Activated naive CD4-positive, alpha-beta T cell treated with anti-CD3 and anti-CD28 coated beads for 36 hours (primary cell): ENCODE measurements at regions of chr6 and their contacts with region 1.

Region 1: DNA sequence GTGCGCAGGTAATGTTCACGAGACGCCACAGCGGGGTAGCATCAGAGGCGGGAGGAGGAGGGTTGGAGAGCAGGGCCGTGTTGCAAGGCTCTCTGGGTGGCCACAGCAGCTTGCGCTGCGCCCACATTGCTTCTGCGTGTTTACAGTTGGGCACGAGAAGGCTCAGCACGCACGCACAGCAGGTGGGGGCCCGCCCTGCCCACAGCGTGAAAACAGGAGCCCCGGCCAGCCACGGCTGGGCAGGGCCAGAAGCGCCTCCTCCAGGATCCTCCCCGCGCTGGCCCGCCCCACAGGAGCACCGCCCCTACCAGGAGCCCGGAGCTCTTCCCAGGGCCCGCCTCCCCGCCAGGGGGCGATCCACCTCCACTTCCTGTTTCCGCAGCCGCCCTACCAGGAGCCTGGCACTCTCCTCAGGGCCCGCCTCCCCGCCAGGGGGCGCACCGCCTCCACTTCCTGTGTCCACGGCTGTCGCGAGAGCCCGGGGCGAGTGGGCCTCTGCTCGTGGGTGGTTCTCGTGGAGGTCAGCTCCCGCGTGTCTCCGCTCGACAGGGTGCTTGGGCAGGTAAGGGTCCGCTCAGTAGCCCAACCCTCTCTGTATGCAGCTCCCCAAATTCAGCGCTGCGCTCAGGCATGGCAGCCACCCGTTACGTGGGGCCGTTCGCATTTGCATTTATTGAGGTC is at the start of gene FAM50B:
- DNase-seq: peak; percentile 95
- H3K4me3 Mint-ChIP-seq: peak within 1 kb of the TSS; percentile 71
- H3K27ac Mint-ChIP-seq: peak within 1 kb of the TSS; percentile 63
- H3K4me1 Mint-ChIP-seq: peaks cover 28% of the 10 kb centered on the region
- H3K27me3 Mint-ChIP-seq: no peaks in the 10 kb centered on the region
- total RNA-seq, gene FAM50B: 4.4 to 5.1 TPM

Region 2: DNA sequence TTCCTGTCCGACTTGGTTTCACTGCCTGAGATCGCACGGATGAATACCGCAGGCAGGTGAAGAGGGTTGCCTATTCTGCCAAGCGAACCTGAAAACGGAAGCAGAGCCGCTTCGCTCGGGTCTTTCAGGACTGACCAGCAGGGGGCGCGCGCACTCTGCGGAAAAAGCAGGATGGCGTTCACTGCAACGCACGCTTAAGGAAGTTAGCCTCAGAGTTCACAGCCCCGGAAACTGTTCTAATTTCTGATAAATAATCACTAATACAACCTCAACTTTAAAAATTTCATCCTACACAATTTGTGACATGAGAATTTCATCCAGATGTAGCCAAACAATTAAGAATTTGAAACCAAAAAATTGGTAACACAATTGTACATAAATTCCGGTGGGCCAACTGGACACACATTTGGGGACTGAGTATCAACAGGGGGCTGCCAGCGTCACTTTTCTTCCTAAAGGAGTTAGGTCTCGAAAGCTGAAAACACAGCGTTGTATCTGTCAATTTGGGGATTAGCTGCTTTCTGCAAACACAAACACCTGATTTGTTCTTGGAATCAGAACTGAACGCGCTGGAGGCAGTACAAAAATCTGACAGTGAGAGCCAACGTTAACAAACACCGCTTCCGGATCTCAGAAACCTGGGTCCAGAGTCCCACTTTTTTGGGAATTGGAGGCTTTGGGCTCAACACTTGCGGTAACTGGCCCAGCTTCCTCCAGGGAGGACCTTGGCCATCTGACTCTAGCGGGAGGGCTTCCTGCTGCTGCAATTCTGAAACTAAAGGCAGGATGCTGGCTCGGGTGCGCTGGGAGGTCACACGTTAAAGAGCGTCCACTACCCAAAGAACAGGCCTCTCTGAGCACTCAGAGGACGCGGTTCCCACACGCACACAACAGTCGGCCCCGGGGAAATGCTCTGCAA is 106.4 kb before region 1 on chr6:
- CTCF ChIA-PET with region 1: interaction called, 13 read pairs
- intact Hi-C with region 1: loop called (anchors 2 kb)
- DNase-seq: peak; percentile 94
- H3K4me3 Mint-ChIP-seq: no peak overlapping the region
- H3K27ac Mint-ChIP-seq: no peak overlapping the region
- H3K4me1 Mint-ChIP-seq: peaks cover 10% of the 10 kb centered on the region
- H3K27me3 Mint-ChIP-seq: peaks cover 9% of the 10 kb centered on the region

Region 3: DNA sequence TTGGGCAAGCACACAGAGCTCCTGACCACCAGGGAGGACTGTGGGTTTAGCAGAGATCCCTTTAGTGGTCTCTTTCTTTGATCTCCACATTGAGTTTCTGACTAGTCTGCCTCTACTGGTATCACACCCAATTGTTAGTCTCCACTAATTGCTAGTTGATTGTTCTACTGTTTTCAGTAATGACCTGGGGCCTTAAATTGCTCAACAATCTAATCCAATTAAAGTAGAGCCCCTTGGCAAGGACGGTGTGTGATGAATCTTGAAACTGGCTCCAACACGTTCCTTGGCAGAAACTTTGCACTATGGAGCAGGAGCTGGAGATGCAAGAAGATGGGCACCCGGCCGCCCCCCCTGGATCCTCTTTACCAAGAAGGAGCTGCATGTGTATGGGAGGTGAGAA is 12.4 kb after region 1 on chr6:
- CTCF ChIA-PET with region 1: interaction called, 24 read pairs
- intact Hi-C with region 1: no loop called
- DNase-seq: no peak
- H3K4me3 Mint-ChIP-seq: no peak overlapping the region
- H3K27ac Mint-ChIP-seq: no peak overlapping the region
- H3K4me1 Mint-ChIP-seq: no peaks in the 10 kb centered on the region
- H3K27me3 Mint-ChIP-seq: peaks cover 10% of the 10 kb centered on the region

Region 4: GRCh38 chr6:3887150-3887700 is 38.2 kb after region 1 on chr6:
- CTCF ChIA-PET with region 1: interaction called, 8 read pairs
- intact Hi-C with region 1: loop called (anchors 1 kb)
- DNase-seq: peak; percentile 14
- H3K4me3 Mint-ChIP-seq: no peak overlapping the region
- H3K27ac Mint-ChIP-seq: no peak overlapping the region
- H3K4me1 Mint-ChIP-seq: no peaks in the 10 kb centered on the region
- H3K27me3 Mint-ChIP-seq: no peaks in the 10 kb centered on the region

Region 5: GRCh38 chr6:3977875-3978711 is 129.0 kb after region 1 on chr6:
- CTCF ChIA-PET with region 1: interaction called, 22 read pairs
- intact Hi-C with region 1: loop called (anchors 1 kb)
- DNase-seq: peak; percentile 64
- H3K4me3 Mint-ChIP-seq: no peak overlapping the region
- H3K27ac Mint-ChIP-seq: no peak overlapping the region
- H3K4me1 Mint-ChIP-seq: peaks cover 6% of the 10 kb centered on the region
- H3K27me3 Mint-ChIP-seq: no peaks in the 10 kb centered on the region

Region 6: DNA sequence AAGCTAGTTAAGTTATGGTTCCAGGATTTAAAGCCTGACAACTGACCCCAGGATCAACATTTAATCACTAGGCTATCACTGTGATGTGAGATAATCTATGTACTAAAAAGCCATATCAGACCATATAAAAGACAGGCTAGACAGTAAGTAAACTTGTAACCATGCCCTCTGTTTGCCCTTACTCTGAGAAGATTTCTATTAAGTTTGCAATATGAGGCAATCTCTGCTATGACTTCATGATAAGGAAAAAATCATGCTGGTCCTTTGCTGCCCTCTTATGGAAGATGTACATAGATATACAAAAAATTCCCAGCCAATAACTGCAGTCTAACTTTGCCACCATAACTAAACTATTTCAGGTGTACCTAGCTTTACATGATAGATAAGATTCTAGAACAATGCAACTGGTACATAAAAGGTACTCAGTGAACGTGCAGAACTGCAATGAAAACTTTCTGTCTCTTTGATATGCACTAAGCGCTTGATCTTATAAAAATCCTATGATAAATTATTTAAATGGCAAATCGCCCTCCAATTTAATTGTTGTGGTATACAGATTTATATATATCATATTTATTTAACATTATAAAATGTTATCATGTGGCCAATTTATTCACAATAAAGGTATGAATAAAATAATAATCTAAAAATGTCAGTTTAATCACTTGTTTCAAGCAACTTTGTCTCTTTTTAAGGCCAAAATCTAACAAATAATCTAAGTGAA is 159.4 kb after region 1 on chr6:
- CTCF ChIA-PET with region 1: no interaction called
- intact Hi-C with region 1: loop called (anchors 1 kb)
- DNase-seq: peak; percentile 18
- H3K4me3 Mint-ChIP-seq: no peak overlapping the region
- H3K27ac Mint-ChIP-seq: no peak overlapping the region
- H3K4me1 Mint-ChIP-seq: peaks cover 48% of the 10 kb centered on the region
- H3K27me3 Mint-ChIP-seq: no peaks in the 10 kb centered on the region

Region 7: DNA sequence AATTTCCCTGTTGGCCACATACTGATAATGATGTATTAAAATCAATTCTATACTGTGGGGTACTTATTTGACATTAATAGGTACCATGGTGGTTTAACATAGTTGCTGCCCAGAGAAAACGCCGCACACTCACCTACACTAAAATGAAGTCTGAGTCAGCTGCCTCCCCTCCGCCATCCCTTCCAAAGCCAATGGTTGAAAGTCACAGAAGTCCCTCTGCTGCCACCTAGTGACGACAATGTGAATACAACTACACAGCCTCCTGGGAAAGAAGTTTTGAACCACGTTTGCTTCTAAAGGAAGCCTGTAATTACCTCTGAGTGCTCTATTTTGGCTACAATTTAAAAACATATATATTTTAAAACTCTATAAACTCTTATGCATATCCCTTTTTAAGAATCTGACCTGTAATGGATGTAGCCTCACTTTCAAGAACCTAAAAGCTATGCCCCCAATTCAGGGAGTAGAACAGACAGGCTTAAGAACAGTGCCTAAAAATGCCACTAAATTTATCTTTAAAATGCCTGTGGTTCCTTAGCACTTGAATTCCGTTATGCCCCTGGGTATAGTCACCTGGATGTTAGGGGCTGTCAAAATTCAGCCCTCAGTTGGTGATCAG is 306.9 kb after region 1 on chr6:
- CTCF ChIA-PET with region 1: interaction called, 5 read pairs
- intact Hi-C with region 1: loop called (anchors 1 kb)
- DNase-seq: peak; percentile 92
- H3K4me3 Mint-ChIP-seq: no peak overlapping the region
- H3K27ac Mint-ChIP-seq: no peak overlapping the region
- H3K4me1 Mint-ChIP-seq: peaks cover 6% of the 10 kb centered on the region
- H3K27me3 Mint-ChIP-seq: peaks cover 3% of the 10 kb centered on the region